ENCODE measurements at regions of chr10 and their contacts with region 1.

Region 1: DNA sequence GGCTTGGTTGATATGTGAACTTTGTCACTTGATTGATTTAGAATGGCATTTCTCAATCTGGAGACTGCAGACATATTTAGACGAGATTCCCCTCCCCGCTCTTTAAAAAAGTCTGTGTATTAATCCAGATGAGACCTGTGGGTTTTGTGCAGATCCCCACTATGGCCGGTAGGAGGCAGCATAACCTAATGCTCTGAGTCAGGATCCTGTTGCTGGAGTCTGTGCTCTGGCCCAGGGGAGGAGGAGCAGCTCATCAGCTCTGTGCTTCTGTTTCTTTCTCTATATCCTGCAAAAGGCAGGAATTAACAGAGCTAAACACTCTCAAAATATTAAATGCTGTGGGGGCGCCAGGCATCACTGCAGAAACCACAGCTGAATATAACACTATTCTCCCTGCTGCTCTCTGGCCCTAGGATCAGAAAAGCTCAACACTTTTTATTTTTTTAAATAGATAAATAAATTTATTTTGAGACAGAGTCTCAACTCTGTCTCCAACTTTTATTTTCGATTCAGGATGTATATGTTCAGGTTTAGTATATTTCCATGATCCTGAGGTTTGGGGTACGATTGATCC is 23.9 kb upstream of the SEPHS1 start:
- DNase-seq: peak; percentile 30 to 81 (median 69)
- H3K4me3 ChIP-seq: no peak overlapping the region
- H3K27ac ChIP-seq: no peak overlapping the region
- H3K27me3 ChIP-seq: peaks cover 0 to 4% (median 0%) of the 10 kb centered on the region in 45 donors
- CTCF ChIP-seq: peak; percentile 69 to 96 (median 91)

Region 2: GRCh38 chr10:13317474-13317873 is 54.5 kb before region 1 on chr10:
- intact Hi-C with region 1: no loop called
- DNase-seq: no peak
- H3K4me3 ChIP-seq: no peak overlapping the region
- H3K27ac ChIP-seq: no peak overlapping the region
- H3K27me3 ChIP-seq: no peaks in the 10 kb centered on the region
- CTCF ChIP-seq: no peak

Region 3: GRCh38 chr10:13340626-13341376 is 31.2 kb before region 1 on chr10:
- intact Hi-C with region 1: no loop called
- DNase-seq: peak in 1 of 10 donors; percentile 50
- H3K4me3 ChIP-seq: peak overlapping the region in 1 of 59 donors; percentile 15
- H3K27ac ChIP-seq: peak overlapping the region in 2 of 59 donors; percentile 36 to 44
- H3K27me3 ChIP-seq: no peaks in the 10 kb centered on the region
- CTCF ChIP-seq: no peak

Region 4: DNA sequence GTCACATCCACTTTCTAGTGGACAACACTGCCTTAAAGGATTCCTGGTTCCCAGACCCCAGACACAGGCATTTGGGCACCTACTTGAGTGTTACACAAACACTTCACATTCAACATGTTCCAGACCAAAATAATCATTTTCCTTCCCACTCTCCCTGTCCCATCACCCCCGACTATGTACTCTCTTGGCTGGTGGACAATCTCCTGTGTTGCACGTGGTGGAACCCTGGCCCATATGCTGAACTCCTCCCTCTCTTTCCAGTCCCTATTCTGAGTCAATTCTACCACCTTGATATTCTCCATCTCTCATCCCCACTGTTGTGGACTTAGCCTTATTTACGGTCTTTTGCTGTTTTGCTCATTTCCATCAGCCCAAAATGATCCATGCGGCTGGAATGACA is 15.6 kb before region 1 on chr10:
- intact Hi-C with region 1: no loop called
- DNase-seq: no peak
- H3K4me3 ChIP-seq: no peak overlapping the region
- H3K27ac ChIP-seq: no peak overlapping the region
- H3K27me3 ChIP-seq: peaks cover 0 to 34% (median 4%) of the 10 kb centered on the region in 45 donors
- CTCF ChIP-seq: no peak

Region 5: DNA sequence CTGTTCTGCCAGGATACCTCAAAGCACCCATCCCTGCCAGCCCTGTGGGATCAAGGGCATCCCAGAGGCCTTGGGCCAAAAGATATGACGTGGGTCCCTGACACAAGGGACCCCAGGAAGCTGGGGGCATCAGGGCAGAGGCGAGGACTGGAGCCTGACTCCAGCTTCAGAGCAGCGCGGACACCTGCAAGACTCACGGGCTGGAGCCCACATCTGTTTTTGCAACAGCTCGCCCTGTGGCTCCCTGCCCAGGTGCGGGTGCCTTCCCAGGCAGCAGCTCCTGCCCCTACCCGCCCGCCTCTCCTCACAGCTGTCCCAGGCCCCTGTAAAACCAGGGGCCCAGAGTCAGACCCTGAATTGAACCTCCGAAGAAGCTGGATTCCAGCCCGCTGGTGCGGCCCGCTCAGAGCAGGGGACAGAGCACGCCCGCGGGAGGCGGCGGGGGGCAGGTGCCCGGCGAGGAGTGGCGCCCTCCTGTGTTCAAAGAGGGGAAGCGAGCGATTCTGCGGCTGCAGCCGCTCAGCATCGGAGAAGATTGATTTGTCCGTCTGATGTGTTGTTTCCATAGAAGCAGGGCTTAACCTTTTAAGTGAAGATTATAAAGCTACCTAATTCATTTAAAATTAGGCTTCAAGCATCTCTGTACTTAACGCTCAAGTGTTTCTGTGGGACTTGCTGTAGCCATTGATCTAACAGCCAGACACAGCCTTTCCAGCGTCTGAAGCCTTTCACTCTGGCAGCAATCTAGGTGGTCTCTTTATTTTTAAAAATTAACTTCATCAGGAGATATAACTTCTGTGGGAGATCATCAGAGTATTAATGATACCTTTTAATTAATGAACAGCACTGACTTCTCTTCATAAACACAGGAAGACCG is 68.4 kb after region 1 on chr10:
- intact Hi-C with region 1: loop called in 1 of 2 experiments (anchors 5 kb)
- DNase-seq: peak in 8 of 10 donors; percentile 21 to 66 (median 38)
- H3K4me3 ChIP-seq: peak overlapping the region; percentile 0 to 69 (median 51)
- H3K27ac ChIP-seq: no peak overlapping the region
- H3K27me3 ChIP-seq: peaks cover 0 to 40% (median 8%) of the 10 kb centered on the region in 45 donors
- CTCF ChIP-seq: peak; percentile 45 to 90 (median 82)

Region 6: GRCh38 chr10:13567030-13567429 is 195.0 kb after region 1 on chr10:
- intact Hi-C with region 1: no loop called
- DNase-seq: no peak
- H3K4me3 ChIP-seq: no peak overlapping the region
- H3K27ac ChIP-seq: no peak overlapping the region
- H3K27me3 ChIP-seq: no peaks in the 10 kb centered on the region
- CTCF ChIP-seq: no peak

Region 7: DNA sequence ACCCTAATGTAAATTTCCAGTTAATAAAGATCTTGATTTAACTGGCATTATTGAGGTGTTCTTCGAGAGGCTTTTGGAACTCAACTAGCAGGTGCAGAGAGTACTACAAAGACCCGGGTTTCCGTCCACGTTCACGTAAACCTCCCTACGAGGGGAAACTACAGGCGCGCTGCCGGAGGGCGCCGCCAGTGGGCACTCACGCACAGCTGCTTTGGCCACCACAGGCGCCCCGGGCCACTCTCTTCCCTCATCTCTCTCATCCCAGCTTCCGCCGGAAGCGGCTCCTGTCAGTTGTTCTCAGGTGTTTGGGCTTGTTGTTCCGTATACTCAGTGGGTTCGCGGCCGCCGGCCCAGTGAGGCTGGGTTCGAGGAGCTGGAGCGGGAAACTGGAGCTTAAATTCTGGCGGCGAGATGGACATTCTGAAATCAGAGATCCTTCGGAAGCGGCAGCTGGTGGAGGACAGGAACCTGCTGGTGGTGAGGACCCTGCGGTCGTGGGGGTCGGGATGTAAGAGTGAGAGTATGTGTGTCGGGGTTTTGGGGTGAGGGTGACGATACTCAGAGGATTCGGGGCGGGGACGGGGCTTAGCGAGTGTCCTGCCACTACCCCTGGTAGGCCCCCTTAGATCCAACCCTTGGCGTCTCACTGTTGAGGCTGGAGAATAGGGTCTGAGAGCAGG is 214.8 kb after region 1 on chr10 and contains the start of gene PRPF18:
- intact Hi-C with region 1: loop called (anchors 5 to 10 kb)
- DNase-seq: peak; percentile 90 to 97 (median 94)
- H3K4me3 ChIP-seq: peak within 1 kb of the TSS; percentile 58 to 99 (median 89)
- H3K27ac ChIP-seq: peak within 1 kb of the TSS in 28 of 59 donors; percentile 10 to 84 (median 60)
- H3K27me3 ChIP-seq: peaks cover 0 to 26% (median 0%) of the 10 kb centered on the region in 45 donors
- CTCF ChIP-seq: peak; percentile 95 to 100 (median 99)
- total RNA-seq, gene PRPF18: 16.6 to 41.9 (median 29.6) TPM